ENCODE measurements at regions of chr9 and their contacts with region 1.

Region 1: GRCh38 chr9:2158111-2158610 is 143.0 kb downstream of the SMARCA2 start:
- DNase-seq: peak; percentile 67
- ATAC-seq: peak; percentile 54
- H3K4me3 ChIP-seq: peak overlapping the region; percentile 41
- H3K27ac ChIP-seq: peak overlapping the region; percentile 79
- H3K4me1 ChIP-seq: peaks cover 5% of the 10 kb centered on the region; the same call in 1 of the 2 replicates
- H3K27me3 ChIP-seq: no peaks in the 10 kb centered on the region
- CTCF ChIP-seq: peak; percentile 23; the same call in 1 of the 2 replicates
- POLR2A ChIP-seq: no peak
- RAD21 ChIP-seq: no peak

Region 2: GRCh38 chr9:1895946-1896345 is 262.2 kb before region 1 on chr9:
- CTCF ChIA-PET with region 1: no interaction called
- POLR2A ChIA-PET with region 1: no interaction called
- dilution Hi-C with region 1: no loop called
- in situ Hi-C with region 1: no loop called
- intact Hi-C with region 1: no loop called
- DNase-seq: no peak
- ATAC-seq: no peak
- H3K4me3 ChIP-seq: no peak overlapping the region
- H3K27ac ChIP-seq: no peak overlapping the region
- H3K4me1 ChIP-seq: no peaks in the 10 kb centered on the region
- H3K27me3 ChIP-seq: no peaks in the 10 kb centered on the region
- CTCF ChIP-seq: no peak
- POLR2A ChIP-seq: no peak
- RAD21 ChIP-seq: no peak

Region 3: DNA sequence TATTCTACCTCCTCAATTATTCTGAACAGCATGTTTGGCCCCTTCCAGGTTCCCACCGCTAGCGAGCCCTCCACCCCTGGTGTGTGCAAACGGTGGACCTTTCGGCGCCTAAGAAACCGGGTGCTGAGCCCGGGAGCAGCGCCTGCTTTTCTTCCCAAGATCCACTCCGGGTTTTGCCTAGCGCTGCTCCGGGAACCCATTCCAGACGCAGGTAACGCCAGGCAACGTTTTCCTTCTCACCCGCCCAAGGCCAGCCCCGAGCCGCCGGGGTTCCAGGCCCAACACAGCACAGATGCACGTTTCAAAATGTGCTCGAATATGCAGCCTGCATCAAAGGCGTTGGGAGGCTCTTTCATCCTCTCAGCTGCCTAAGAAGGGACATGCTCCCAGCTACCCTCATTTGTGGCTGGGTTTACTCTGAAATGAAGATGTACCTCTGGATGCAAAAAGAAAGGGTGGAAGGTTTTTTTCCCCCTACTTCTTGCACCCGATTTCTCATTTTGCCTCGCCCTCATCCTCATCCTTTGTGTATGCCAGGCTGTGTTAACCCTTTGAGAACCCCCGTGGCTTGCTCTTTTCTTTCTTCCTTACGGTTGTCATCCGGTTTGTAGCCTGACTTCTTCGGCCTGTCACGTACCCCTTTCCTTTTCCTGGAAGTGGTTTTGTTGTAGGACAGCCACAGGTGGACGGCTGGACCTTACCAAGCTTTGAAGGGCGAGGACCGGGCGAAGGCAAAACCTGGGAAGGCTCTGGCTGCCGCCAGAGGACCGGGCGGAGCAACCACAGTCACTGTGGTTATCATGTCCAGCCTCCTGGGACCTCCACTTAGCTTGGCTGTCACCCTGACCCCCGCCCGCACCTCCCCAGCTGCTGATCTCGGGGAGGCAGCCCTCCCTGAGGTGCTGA is 83.9 kb after region 1 on chr9:
- CTCF ChIA-PET with region 1: no interaction called
- POLR2A ChIA-PET with region 1: no interaction called
- dilution Hi-C with region 1: no loop called
- in situ Hi-C with region 1: no loop called
- intact Hi-C with region 1: loop called (anchors 2 kb)
- DNase-seq: peak; percentile 88
- ATAC-seq: peak; percentile 99
- H3K4me3 ChIP-seq: peak overlapping the region; percentile 44
- H3K27ac ChIP-seq: peak overlapping the region; percentile 55; the same call in 1 of the 2 replicates
- H3K4me1 ChIP-seq: peaks cover 5% of the 10 kb centered on the region; the same call in 1 of the 2 replicates
- H3K27me3 ChIP-seq: peaks cover 3% of the 10 kb centered on the region
- CTCF ChIP-seq: no peak
- POLR2A ChIP-seq: no peak
- RAD21 ChIP-seq: 0 out of 2 replicates have a peak, but pooled peaks have one; percentile 11

Region 4: GRCh38 chr9:2356041-2356790 is 198.1 kb after region 1 on chr9:
- CTCF ChIA-PET with region 1: interaction called, 11 read pairs
- POLR2A ChIA-PET with region 1: no interaction called
- dilution Hi-C with region 1: no loop called
- in situ Hi-C with region 1: no loop called
- intact Hi-C with region 1: no loop called
- DNase-seq: no peak
- ATAC-seq: no peak
- H3K4me3 ChIP-seq: no peak overlapping the region
- H3K27ac ChIP-seq: no peak overlapping the region
- H3K4me1 ChIP-seq: no peaks in the 10 kb centered on the region
- H3K27me3 ChIP-seq: peaks cover 3% of the 10 kb centered on the region; the same call in 1 of the 2 replicates
- CTCF ChIP-seq: no peak
- POLR2A ChIP-seq: no peak
- RAD21 ChIP-seq: no peak

Region 5: DNA sequence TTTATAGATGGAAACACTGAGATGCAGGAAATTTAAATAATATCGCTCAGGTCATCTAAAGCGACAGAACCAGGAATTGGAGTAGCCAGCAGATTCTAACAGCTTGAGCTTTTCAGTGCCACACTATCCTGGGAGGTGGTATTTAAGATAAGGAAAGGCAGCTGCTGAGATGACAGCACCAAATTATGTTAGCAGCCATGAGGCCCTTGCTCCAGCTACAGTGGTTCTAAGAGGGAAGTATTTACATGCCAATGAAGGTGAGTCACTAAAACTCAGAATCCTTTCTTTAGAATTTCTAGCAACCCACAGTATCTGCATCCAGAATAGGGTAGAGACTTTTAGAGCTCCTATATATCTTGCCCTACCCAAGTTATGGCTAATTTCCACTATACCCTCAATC is 336.4 kb after region 1 on chr9:
- CTCF ChIA-PET with region 1: no interaction called
- POLR2A ChIA-PET with region 1: no interaction called
- dilution Hi-C with region 1: no loop called
- in situ Hi-C with region 1: no loop called
- intact Hi-C with region 1: loop called (anchors 10 kb)
- DNase-seq: peak; percentile 88
- ATAC-seq: peak; percentile 94
- H3K4me3 ChIP-seq: no peak overlapping the region
- H3K27ac ChIP-seq: peak overlapping the region; percentile 76; the same call in 1 of the 2 replicates
- H3K4me1 ChIP-seq: peaks cover 12% of the 10 kb centered on the region
- H3K27me3 ChIP-seq: no peaks in the 10 kb centered on the region
- CTCF ChIP-seq: no peak
- POLR2A ChIP-seq: no peak
- RAD21 ChIP-seq: 0 out of 2 replicates have a peak, but pooled peaks have one; percentile 11

Region 6: GRCh38 chr9:2559212-2560152 is 401.3 kb after region 1 on chr9:
- CTCF ChIA-PET with region 1: no interaction called
- POLR2A ChIA-PET with region 1: no interaction called
- dilution Hi-C with region 1: no loop called
- in situ Hi-C with region 1: no loop called
- intact Hi-C with region 1: loop called (anchors 5 kb)
- DNase-seq: peak; percentile 95
- ATAC-seq: peak; percentile 98
- H3K4me3 ChIP-seq: no peak overlapping the region
- H3K27ac ChIP-seq: peak overlapping the region; percentile 93
- H3K4me1 ChIP-seq: peaks cover 12% of the 10 kb centered on the region
- H3K27me3 ChIP-seq: no peaks in the 10 kb centered on the region
- CTCF ChIP-seq: no peak
- POLR2A ChIP-seq: no peak
- RAD21 ChIP-seq: no peak